Heart right ventricle (tissue), 16 donors: ENCODE measurements at regions of chr12 and their contacts with region 1.

Region 1: GRCh38 chr12:546921-547845 is 87.4 kb downstream of the B4GALNT3 start:
- DNase-seq: peak; percentile 49 to 80
- ATAC-seq: peak; percentile 23 to 69 (median 46)
- H3K4me3 ChIP-seq: no peak overlapping the region
- H3K27ac ChIP-seq: peak overlapping the region in 7 of 10 donors; percentile 7 to 89 (median 26)
- H3K4me1 ChIP-seq: peaks cover 4 to 62% (median 27%) of the 10 kb centered on the region in 9 donors
- H3K27me3 ChIP-seq: peaks cover 0 to 17% (median 7%) of the 10 kb centered on the region in 7 donors
- CTCF ChIP-seq: peak; percentile 93 to 99 (median 98)

Region 2: GRCh38 chr12:442235-442884 is 104.8 kb before region 1 on chr12:
- intact Hi-C with region 1: loop called in 5 of 10 experiments (anchors 1 to 5 kb)
- DNase-seq: peak in 1 of 2 donors; percentile 35
- ATAC-seq: peak in 3 of 8 donors; percentile 22 to 53 (median 41)
- H3K4me3 ChIP-seq: no peak overlapping the region
- H3K27ac ChIP-seq: no peak overlapping the region
- H3K4me1 ChIP-seq: no peaks in the 10 kb centered on the region
- H3K27me3 ChIP-seq: no peaks in the 10 kb centered on the region
- CTCF ChIP-seq: peak; percentile 59 to 84 (median 80)

Region 3: DNA sequence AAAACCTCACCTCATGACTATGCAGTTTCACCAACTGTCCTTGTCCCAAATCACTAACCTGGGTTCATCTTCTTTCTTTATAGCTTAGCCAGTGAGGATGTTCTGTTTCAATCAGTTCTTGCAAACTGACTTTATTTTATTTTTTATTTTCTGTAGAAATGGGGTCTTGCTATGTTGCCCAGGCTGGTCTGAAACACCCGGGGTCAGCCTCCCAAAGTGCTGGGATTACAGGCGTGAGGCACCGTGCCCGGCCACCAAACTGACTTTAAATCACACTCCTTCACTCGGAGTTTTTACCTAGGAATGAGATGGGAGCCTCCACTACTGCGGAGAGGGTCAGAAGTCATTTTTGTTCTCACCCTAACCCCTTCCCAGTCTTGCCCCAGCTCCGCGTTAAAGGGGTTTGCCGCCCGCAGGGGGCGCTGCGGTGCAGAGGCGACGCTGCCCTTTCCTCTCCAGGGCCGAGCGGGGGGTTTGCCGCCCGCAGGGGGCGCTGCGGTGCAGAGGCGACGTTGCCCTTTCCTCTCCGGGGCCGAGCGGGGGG is 94.4 kb before region 1 on chr12:
- intact Hi-C with region 1: loop called in 8 of 10 experiments (anchors 1 to 5 kb)
- DNase-seq: peak; percentile 25 to 55
- ATAC-seq: peak in 3 of 8 donors; percentile 3 to 61 (median 43)
- H3K4me3 ChIP-seq: no peak overlapping the region
- H3K27ac ChIP-seq: no peak overlapping the region
- H3K4me1 ChIP-seq: peaks cover 0 to 38% (median 0%) of the 10 kb centered on the region in 9 donors
- H3K27me3 ChIP-seq: peaks cover 0 to 31% (median 3%) of the 10 kb centered on the region in 7 donors
- CTCF ChIP-seq: no peak